Activated CD4-positive, alpha-beta T cell treated with anti-CD3 and anti-CD28 coated beads for 36 hours (primary cell): ENCODE measurements at regions of chr4 and their contacts with region 1.

Region 1: GRCh38 chr4:87973283-87974169 is 2.0 kb upstream of the SPP1 start:
- DNase-seq: peak; percentile 63
- ATAC-seq: peak; percentile 69
- H3K4me3 Mint-ChIP-seq: no peak overlapping the region
- H3K27ac Mint-ChIP-seq: no peak overlapping the region
- H3K4me1 Mint-ChIP-seq: peaks cover 6% of the 10 kb centered on the region
- H3K27me3 Mint-ChIP-seq: peaks cover 33% of the 10 kb centered on the region

Region 2: GRCh38 chr4:87679449-87680169 is 293.9 kb before region 1 on chr4:
- CTCF ChIA-PET with region 1: interaction called, 4 read pairs
- POLR2A ChIA-PET with region 1: no interaction called
- intact Hi-C with region 1: loop called in 1 of 2 experiments (anchors 2 kb)
- DNase-seq: peak; percentile 62
- ATAC-seq: no peak
- H3K4me3 Mint-ChIP-seq: no peak overlapping the region
- H3K27ac Mint-ChIP-seq: no peak overlapping the region
- H3K4me1 Mint-ChIP-seq: no peaks in the 10 kb centered on the region
- H3K27me3 Mint-ChIP-seq: peaks cover 2% of the 10 kb centered on the region

Region 3: GRCh38 chr4:87697272-87697671 is 276.3 kb before region 1 on chr4:
- CTCF ChIA-PET with region 1: no interaction called
- POLR2A ChIA-PET with region 1: no interaction called
- intact Hi-C with region 1: no loop called
- DNase-seq: no peak
- ATAC-seq: no peak
- H3K4me3 Mint-ChIP-seq: no peak overlapping the region
- H3K27ac Mint-ChIP-seq: no peak overlapping the region
- H3K4me1 Mint-ChIP-seq: no peaks in the 10 kb centered on the region
- H3K27me3 Mint-ChIP-seq: peaks cover 3% of the 10 kb centered on the region

Region 4: GRCh38 chr4:87957061-87957460 is 16.5 kb before region 1 on chr4:
- CTCF ChIA-PET with region 1: interaction called, 10 read pairs
- POLR2A ChIA-PET with region 1: interaction called, 3 read pairs
- intact Hi-C with region 1: no loop called
- DNase-seq: no peak
- ATAC-seq: no peak
- H3K4me3 Mint-ChIP-seq: no peak overlapping the region
- H3K27ac Mint-ChIP-seq: no peak overlapping the region
- H3K4me1 Mint-ChIP-seq: no peaks in the 10 kb centered on the region
- H3K27me3 Mint-ChIP-seq: no peaks in the 10 kb centered on the region

Region 5: GRCh38 chr4:87985097-87985886 is 11.8 kb after region 1 on chr4:
- CTCF ChIA-PET with region 1: interaction called, 16 read pairs
- POLR2A ChIA-PET with region 1: no interaction called
- intact Hi-C with region 1: no loop called
- DNase-seq: peak; percentile 68
- ATAC-seq: peak; percentile 93
- H3K4me3 Mint-ChIP-seq: no peak overlapping the region
- H3K27ac Mint-ChIP-seq: no peak overlapping the region
- H3K4me1 Mint-ChIP-seq: no peaks in the 10 kb centered on the region
- H3K27me3 Mint-ChIP-seq: peaks cover 12% of the 10 kb centered on the region

Region 6: GRCh38 chr4:88283661-88284438 is 310.3 kb after region 1 on chr4:
- CTCF ChIA-PET with region 1: no interaction called
- POLR2A ChIA-PET with region 1: no interaction called
- intact Hi-C with region 1: no loop called
- DNase-seq: peak; percentile 77
- ATAC-seq: peak; percentile 30
- H3K4me3 Mint-ChIP-seq: peak overlapping the region; percentile 96
- H3K27ac Mint-ChIP-seq: peak overlapping the region; percentile 100
- H3K4me1 Mint-ChIP-seq: peaks cover 40% of the 10 kb centered on the region
- H3K27me3 Mint-ChIP-seq: no peaks in the 10 kb centered on the region

Region 7: GRCh38 chr4:88870428-88870827 is 896.9 kb after region 1 on chr4:
- CTCF ChIA-PET with region 1: no interaction called
- POLR2A ChIA-PET with region 1: no interaction called
- intact Hi-C with region 1: no loop called
- DNase-seq: no peak
- ATAC-seq: no peak
- H3K4me3 Mint-ChIP-seq: no peak overlapping the region
- H3K27ac Mint-ChIP-seq: no peak overlapping the region
- H3K4me1 Mint-ChIP-seq: no peaks in the 10 kb centered on the region
- H3K27me3 Mint-ChIP-seq: no peaks in the 10 kb centered on the region